HEK293 (cell line): ENCODE measurements at regions of chr19 and their contacts with region 1.

Region 1: GRCh38 chr19:4988770-4989251 is 19.9 kb downstream of the KDM4B start:
- H3K4me3 ChIP-seq: no peak overlapping the region
- H3K27ac ChIP-seq: no peak overlapping the region
- H3K4me1 ChIP-seq: peaks cover 12% of the 10 kb centered on the region
- CTCF ChIP-seq: no peak

Region 2: DNA sequence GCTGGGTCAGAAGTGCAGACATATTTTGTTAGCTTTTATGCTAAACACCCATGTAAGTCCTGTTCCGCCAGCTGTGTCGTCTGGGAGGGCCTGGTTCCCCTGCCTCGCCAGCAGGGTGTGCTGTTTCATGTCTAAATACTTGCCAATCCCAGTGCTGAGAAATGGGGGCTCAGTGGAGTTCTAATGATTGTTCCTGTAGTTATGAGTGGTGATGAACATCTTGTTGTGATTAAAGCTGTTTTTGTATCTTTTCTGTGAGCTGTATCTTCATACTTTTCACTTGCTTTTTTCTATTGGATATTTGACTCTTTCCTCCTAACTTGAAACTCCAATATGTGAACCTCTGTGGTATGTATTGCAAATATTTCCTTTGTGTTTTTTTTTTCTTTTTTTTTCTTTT is 12.8 kb after region 1 on chr19:
- CTCF ChIA-PET with region 1: interaction called, 21 read pairs
- POLR2A ChIA-PET with region 1: no interaction called
- H3K4me3 ChIP-seq: no peak overlapping the region
- H3K27ac ChIP-seq: no peak overlapping the region
- H3K4me1 ChIP-seq: no peaks in the 10 kb centered on the region
- CTCF ChIP-seq: 0 out of 2 replicates have a peak, but pooled peaks have one; percentile 34

Region 3: GRCh38 chr19:5057861-5058260 is 69.0 kb after region 1 on chr19:
- CTCF ChIA-PET with region 1: no interaction called
- POLR2A ChIA-PET with region 1: no interaction called
- H3K4me3 ChIP-seq: no peak overlapping the region
- H3K27ac ChIP-seq: no peak overlapping the region
- H3K4me1 ChIP-seq: no peaks in the 10 kb centered on the region
- CTCF ChIP-seq: no peak